Calu3 (cell line): ENCODE measurements at regions of chr15 and their contacts with region 1.

Region 1: GRCh38 chr15:84734794-84735479 is 13.5 kb upstream of the ZNF592 start:
- DNase-seq: peak; percentile 94
- H3K4me3 Mint-ChIP-seq: peak overlapping the region; percentile 45
- H3K27ac Mint-ChIP-seq: peak overlapping the region; percentile 96
- H3K4me1 Mint-ChIP-seq: peaks cover 39% of the 10 kb centered on the region
- H3K27me3 Mint-ChIP-seq: no peaks in the 10 kb centered on the region
- CTCF ChIP-seq: no peak

Region 2: GRCh38 chr15:84588053-84588874 is 146.7 kb before region 1 on chr15:
- CTCF ChIA-PET with region 1: no interaction called
- intact Hi-C with region 1: no loop called
- DNase-seq: peak; percentile 95
- H3K4me3 Mint-ChIP-seq: peak overlapping the region; percentile 32
- H3K27ac Mint-ChIP-seq: no peak overlapping the region
- H3K4me1 Mint-ChIP-seq: peaks cover 9% of the 10 kb centered on the region
- H3K27me3 Mint-ChIP-seq: no peaks in the 10 kb centered on the region
- CTCF ChIP-seq: peak; percentile 96

Region 3: GRCh38 chr15:84748274-84749110 is 13.6 kb after region 1 on chr15 and contains the start of gene ZNF592:
- CTCF ChIA-PET with region 1: interaction called, 15 read pairs
- intact Hi-C with region 1: loop called (anchors 2 kb)
- DNase-seq: peak; percentile 93
- H3K4me3 Mint-ChIP-seq: peak within 1 kb of the TSS; percentile 94
- H3K27ac Mint-ChIP-seq: peak within 1 kb of the TSS; percentile 84
- H3K4me1 Mint-ChIP-seq: peaks cover 48% of the 10 kb centered on the region
- H3K27me3 Mint-ChIP-seq: no peaks in the 10 kb centered on the region
- CTCF ChIP-seq: peak; percentile 26
- total RNA-seq, gene ZNF592: 49.5 and 49.6 TPM in 2 replicates

Region 4: GRCh38 chr15:84844964-84845363 is 110.0 kb after region 1 on chr15:
- CTCF ChIA-PET with region 1: no interaction called
- intact Hi-C with region 1: no loop called
- DNase-seq: no peak
- H3K4me3 Mint-ChIP-seq: no peak overlapping the region
- H3K27ac Mint-ChIP-seq: peak overlapping the region; percentile 42
- H3K4me1 Mint-ChIP-seq: peaks cover 32% of the 10 kb centered on the region
- H3K27me3 Mint-ChIP-seq: no peaks in the 10 kb centered on the region
- CTCF ChIP-seq: no peak